Panc1 (cell line): ENCODE measurements at regions of chr15 and their contacts with region 1.

Region 1: DNA sequence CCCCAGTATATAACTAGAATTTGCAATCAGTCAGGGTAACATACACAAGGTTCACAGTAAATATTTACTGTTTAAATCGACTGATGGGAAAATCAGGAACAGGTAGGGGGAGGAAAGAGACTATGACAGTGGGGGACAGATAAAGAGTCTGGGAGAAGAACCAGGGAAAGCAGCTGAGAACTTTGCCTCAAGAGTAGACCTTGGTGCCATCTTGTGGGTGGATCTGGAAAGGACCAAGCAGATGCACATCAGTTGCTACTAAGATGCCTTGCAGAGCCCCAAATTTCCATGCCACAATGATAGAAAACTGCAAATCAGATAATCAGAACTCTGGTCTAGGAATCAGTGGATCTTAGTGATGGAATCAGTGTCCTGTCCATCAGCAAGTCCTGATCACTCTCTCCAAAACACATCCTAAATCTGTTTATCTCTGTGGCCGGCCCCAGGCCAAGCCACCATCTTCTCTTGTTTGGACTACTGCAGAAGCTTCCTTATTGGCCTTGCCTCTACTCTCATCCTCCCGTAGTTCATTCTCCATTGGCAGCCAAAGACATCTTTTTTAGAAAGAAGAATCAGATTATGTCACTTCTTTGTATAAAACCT is 62.7 kb downstream of the PDE8A start:
- DNase-seq: peak; percentile 58
- ATAC-seq: peak; percentile 88
- H3K4me3 ChIP-seq: no peak overlapping the region
- H3K27ac ChIP-seq: no peak overlapping the region
- H3K4me1 ChIP-seq: peaks cover 14% of the 10 kb centered on the region
- H3K27me3 ChIP-seq: no peaks in the 10 kb centered on the region
- CTCF ChIP-seq: peak; percentile 82

Region 2: DNA sequence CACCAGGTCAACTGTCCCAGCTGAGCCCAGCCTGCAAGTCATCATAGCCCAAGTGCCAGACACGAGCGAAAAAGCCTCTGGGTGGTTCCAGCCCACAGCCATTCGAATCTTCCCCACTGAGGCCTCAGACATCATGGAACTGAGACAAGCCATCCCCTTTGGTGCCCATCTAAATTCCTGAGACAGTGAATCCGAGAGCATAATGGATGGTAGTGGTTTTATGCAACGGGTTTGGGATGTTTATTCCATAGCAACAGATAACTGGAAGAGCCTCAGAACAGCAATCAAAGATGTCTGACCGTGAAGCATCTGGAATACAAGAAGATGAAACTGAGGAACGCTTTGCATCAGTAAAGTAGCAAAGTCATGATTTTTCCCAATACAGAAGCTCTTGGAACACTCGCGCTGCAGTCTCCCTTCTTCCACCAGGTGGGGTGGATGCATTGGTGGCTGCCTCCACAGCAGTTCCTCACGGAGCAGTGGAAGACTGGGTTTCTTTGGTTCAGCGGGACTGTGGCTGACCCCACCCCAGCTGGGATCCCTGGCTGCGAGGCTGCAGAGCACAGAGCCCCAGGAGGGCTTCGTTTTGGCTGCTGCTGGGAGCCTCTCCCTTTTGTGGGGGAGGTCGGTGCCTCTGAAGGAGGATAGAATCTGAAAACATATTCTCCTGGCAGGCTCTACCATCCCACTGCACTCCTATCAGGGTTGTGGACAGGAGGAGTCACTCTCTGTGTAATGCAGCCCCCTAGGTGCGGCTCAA is 89.1 kb before region 1 on chr15:
- CTCF ChIA-PET with region 1: interaction called, 6 read pairs
- POLR2A ChIA-PET with region 1: interaction called, 8 read pairs
- in situ Hi-C with region 1: no loop called
- intact Hi-C with region 1: loop called (anchors 1 kb)
- DNase-seq: peak; percentile 41
- ATAC-seq: peak; percentile 99
- H3K4me3 ChIP-seq: peak overlapping the region; percentile 29 to 52
- H3K27ac ChIP-seq: no peak overlapping the region
- H3K4me1 ChIP-seq: peaks cover 5% of the 10 kb centered on the region
- H3K27me3 ChIP-seq: no peaks in the 10 kb centered on the region
- CTCF ChIP-seq: peak; percentile 92